ENCODE measurements at regions of chr3 and their contacts with region 1.

Region 1: GRCh38 chr3:46488735-46489361 is 8.9 kb upstream of the RTP3 start:
- DNase-seq: peak; percentile 96
- H3K4me3 Mint-ChIP-seq: peak overlapping the region; percentile 41
- H3K27ac Mint-ChIP-seq: peak overlapping the region; percentile 12
- H3K4me1 Mint-ChIP-seq: peaks cover 11% of the 10 kb centered on the region
- H3K27me3 Mint-ChIP-seq: peaks cover 1% of the 10 kb centered on the region
- CTCF ChIP-seq: peak; percentile 95

Region 2: GRCh38 chr3:46517016-46517793 is 28.4 kb after region 1 on chr3:
- CTCF ChIA-PET with region 1: interaction called, 13 read pairs
- intact Hi-C with region 1: no loop called
- DNase-seq: peak; percentile 49
- H3K4me3 Mint-ChIP-seq: no peak overlapping the region
- H3K27ac Mint-ChIP-seq: peak overlapping the region; percentile 96
- H3K4me1 Mint-ChIP-seq: peaks cover 10% of the 10 kb centered on the region
- H3K27me3 Mint-ChIP-seq: no peaks in the 10 kb centered on the region
- CTCF ChIP-seq: no peak

Region 3: DNA sequence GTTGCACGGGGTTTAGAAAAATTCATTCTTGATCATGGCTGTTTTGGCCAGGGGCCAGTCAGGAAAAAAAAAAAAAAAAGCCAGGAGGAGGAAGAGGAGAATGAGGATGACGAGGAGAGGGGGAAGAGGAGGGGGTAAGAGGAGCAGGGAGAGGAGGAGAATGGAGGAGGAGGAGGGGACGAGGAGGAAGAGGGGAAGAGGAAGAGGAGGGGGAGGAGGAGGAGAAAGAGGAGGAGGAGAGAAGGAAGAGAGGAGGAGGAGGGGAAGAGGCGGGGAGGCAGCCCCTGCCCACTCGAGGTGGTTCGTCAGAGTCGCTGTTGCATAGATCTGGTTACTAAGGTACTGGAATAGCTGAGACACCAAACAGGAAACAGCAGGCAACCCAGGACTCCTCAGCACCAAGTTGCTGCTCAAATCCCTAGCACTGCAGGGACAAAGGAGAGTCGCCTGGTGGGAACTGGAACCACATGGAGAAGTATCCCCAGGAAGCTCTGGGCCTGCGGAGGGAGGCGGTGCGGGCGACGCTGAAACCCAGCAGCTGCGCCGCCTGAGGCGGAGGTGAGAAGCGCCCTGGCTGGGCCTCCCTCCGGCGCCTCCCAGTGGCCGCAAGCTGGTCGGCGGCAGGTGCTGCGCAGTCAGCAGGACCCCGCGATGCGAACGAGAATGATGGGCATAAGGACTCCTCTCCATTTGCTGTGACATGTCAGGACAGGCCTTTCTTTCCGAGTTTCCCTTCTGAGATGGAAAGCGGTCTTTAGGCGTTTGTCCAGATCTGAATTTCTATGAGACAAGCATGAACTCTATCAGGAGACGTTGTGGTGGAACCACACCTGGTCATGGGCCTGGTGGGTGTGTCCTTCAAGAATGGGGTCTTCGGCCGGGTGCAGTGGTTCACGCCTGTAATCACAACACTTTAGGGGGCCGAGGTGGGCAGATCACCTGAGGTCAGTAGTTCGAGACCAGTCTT is 141.0 kb after region 1 on chr3:
- CTCF ChIA-PET with region 1: interaction called, 47 read pairs
- intact Hi-C with region 1: loop called (anchors 2 kb)
- DNase-seq: peak; percentile 85
- H3K4me3 Mint-ChIP-seq: no peak overlapping the region
- H3K27ac Mint-ChIP-seq: no peak overlapping the region
- H3K4me1 Mint-ChIP-seq: no peaks in the 10 kb centered on the region
- H3K27me3 Mint-ChIP-seq: peaks cover 32% of the 10 kb centered on the region
- CTCF ChIP-seq: peak; percentile 94

Region 4: DNA sequence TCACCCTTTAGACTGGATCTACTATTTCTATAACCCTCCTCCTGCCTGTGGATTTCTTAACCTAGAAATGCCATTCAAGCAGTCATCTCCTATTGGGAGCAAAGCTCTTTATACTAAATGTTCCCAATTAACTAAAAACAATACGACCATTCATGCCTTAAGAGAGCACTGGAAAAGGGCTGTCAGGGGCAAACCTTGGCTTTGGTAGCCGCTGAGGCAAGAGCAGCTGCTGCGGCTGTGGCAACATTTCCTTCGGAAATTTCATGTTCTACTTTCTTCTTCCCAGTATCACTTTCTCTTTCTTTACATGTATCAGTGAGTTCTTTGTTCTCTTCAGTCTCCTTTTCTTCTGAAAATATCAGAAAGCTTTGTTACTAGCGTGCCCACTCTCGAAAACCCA is 1146.1 kb after region 1 on chr3:
- CTCF ChIA-PET with region 1: no interaction called
- intact Hi-C with region 1: no loop called
- DNase-seq: no peak
- H3K4me3 Mint-ChIP-seq: no peak overlapping the region
- H3K27ac Mint-ChIP-seq: no peak overlapping the region
- H3K4me1 Mint-ChIP-seq: no peaks in the 10 kb centered on the region
- H3K27me3 Mint-ChIP-seq: no peaks in the 10 kb centered on the region
- CTCF ChIP-seq: no peak

Measured in Calu3 (cell line).